Right ventricle myocardium inferior (tissue), 1 donor: ENCODE measurements at regions of chr20 and their contacts with region 1.

Region 1: GRCh38 chr20:36605399-36606157 is at the start of gene RAB5IF:
- DNase-seq: peak; percentile 99
- ATAC-seq: peak; percentile 97
- total RNA-seq, gene RAB5IF: 65.4 TPM

Region 2: DNA sequence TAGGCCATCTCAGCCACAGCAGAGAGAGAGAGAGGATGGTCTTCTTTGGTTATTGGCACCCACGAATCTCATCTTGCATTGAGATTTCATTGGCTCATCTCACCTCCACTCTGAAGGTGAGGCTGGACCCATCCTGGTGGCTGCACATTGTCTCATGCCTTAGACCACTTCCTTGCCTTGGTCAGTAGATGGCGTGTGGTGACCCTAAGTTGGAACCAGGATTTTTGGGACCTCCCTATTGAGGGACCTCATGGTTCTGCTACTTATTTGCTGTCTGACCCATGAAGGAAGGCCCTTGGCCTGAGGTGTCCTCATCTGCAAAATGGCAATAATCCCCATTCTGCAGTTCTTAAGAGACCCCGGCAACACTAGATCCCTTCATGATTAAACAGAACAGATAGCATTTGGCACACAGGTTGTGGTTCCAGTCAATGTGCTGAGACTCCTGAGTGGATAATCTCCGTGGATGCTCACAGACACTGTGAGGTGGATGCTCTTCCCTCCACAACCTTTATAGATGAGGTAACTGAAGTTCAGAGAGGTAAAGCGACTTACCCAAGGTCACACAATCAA is 390.8 kb before region 1 on chr20:
- intact Hi-C with region 1: loop called (anchors 10 kb)
- DNase-seq: no peak
- ATAC-seq: no peak

Region 3: GRCh38 chr20:36331006-36331608 is 274.5 kb before region 1 on chr20:
- intact Hi-C with region 1: no loop called
- DNase-seq: no peak
- ATAC-seq: no peak

Region 4: DNA sequence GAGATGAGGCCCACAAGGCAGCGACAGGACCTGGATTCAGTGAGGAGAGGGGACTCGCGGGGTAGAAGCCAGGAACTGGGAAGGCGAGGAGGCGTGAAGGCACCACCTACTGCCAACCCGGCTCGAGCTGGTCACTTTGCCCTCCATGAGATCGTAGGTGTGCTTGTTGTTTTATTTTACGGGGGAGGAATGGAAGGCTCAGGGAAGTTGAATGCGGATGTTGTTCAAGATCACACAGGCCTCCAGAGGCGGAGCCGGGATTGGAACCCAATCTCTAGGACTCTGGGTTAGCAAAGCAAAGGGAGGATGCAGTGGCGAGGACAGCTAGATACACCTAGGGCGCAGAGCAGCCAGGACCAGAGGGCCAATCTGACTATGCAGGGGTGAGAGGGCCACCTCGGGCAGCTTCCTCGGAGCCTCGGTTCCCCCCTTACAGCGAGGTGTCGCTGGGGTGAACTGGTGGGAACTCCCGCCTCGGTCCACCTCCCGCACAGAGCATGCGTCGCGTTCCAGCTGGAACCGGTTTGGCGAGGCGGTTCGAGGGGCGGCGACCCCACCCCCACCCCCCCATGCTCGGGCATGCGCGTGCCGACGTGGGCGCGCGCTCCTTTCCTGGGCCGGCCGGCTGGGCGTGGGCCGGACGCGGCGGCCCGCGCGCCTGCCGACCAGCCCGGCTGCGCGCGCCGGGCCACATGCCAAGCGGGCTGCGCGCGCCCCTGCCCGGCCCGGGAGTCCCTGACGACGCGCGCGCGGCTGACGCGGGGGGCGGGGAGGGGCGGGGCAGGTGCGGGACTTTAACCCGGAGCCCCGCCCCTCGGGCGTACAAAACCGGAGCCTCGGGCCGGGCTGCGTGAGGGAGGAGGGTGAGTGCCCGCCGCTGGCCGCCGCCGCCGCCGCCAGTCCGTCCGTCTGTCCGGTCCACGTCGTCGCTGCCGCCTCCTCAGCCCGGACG is 144.7 kb before region 1 on chr20:
- intact Hi-C with region 1: loop called (anchors 10 kb)
- DNase-seq: peak; percentile 97
- ATAC-seq: peak; percentile 76

Region 5: DNA sequence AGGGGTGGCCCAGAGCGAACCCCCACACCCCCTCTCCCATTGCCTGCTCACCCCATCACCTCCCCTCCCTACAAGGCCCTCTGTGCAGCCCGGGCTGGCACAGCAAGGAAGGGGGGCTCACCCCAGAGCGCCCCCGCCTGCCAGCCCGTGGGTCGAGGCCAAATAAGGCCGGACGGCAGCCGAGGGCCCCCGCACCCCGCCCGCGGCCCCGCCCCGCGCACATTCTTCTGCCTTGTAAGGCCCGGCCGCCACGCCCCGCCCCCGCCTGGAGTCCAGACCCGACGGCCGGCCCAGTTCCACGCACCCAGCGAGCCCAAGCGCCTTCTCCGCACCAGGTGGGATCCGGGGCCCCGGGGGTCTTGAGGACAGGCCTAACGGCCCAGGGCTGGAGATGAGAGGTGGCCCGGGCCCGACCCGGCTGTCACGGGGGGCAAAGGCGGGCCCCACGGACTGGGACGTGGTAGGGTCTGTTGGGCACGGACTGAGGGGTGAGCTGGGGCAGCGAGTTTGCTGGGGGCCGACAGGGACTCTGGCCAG is 64.3 kb before region 1 on chr20 and contains the start of gene MYL9:
- intact Hi-C with region 1: loop called (anchors 5 kb)
- DNase-seq: peak; percentile 97
- ATAC-seq: peak; percentile 91
- total RNA-seq, gene MYL9: 1,923 TPM

Region 6: GRCh38 chr20:36550797-36551299 is 54.7 kb before region 1 on chr20:
- intact Hi-C with region 1: loop called (anchors 2 kb)
- DNase-seq: no peak
- ATAC-seq: peak; percentile 29

Region 7: GRCh38 chr20:36573103-36573794 is 32.3 kb before region 1 on chr20 and contains the start of gene TGIF2:
- intact Hi-C with region 1: loop called (anchors 5 kb)
- DNase-seq: peak; percentile 85
- ATAC-seq: peak; percentile 85
- total RNA-seq, gene TGIF2: 4.5 TPM

Region 8: GRCh38 chr20:36861875-36862801 is 256.6 kb after region 1 on chr20:
- intact Hi-C with region 1: loop called (anchors 10 kb)
- DNase-seq: peak; percentile 90
- ATAC-seq: peak; percentile 63